A549 (cell line): ENCODE measurements at regions of chr5 and their contacts with region 1.

Region 1: GRCh38 chr5:170070556-170071412 is 34.9 kb upstream of the FOXI1 start:
- DNase-seq: peak; percentile 45 to 52
- ATAC-seq: peak; percentile 70 to 97; a peak in 3 of 6 replicates
- H3K4me3 ChIP-seq: no peak overlapping the region
- H3K27ac ChIP-seq: no peak overlapping the region
- H3K4me1 ChIP-seq: no peaks in the 10 kb centered on the region
- CTCF ChIP-seq: peak; percentile 77
- EP300 ChIP-seq: no peak
- POLR2A ChIP-seq: no peak
- RAD21 ChIP-seq: peak; percentile 56 to 57

Region 2: GRCh38 chr5:169325273-169325672 is 745.5 kb before region 1 on chr5:
- CTCF ChIA-PET with region 1: no interaction called
- POLR2A ChIA-PET with region 1: no interaction called
- DNase-seq: no peak
- ATAC-seq: no peak
- H3K4me3 ChIP-seq: no peak overlapping the region
- H3K27ac ChIP-seq: no peak overlapping the region
- H3K4me1 ChIP-seq: no peaks in the 10 kb centered on the region
- CTCF ChIP-seq: no peak
- EP300 ChIP-seq: no peak
- POLR2A ChIP-seq: no peak
- RAD21 ChIP-seq: no peak

Region 3: DNA sequence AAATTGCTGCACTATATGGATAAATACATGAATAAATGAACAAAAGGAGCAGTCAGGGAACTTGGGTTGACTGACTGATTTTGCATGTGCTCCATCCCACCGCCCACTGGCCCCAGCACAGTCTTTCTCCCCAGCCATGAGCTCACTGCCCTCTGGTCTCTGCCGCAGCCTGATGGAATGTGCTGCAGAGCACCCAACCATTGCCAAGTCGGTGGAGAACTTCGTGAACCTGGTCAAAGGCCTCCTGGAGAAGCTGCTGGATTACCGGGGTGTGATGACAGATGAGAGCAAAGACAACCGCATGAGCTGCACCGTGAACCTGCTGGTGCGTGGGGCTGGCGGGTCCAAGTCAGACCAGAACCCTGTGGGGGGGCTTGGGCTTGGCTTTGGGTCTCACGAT is 36.6 kb before region 1 on chr5:
- CTCF ChIA-PET with region 1: interaction called, 11 read pairs
- POLR2A ChIA-PET with region 1: no interaction called
- DNase-seq: no peak
- ATAC-seq: no peak
- H3K4me3 ChIP-seq: no peak overlapping the region
- H3K27ac ChIP-seq: no peak overlapping the region
- H3K4me1 ChIP-seq: no peaks in the 10 kb centered on the region
- CTCF ChIP-seq: no peak
- EP300 ChIP-seq: no peak
- POLR2A ChIP-seq: no peak
- RAD21 ChIP-seq: no peak

Region 4: GRCh38 chr5:170056561-170057267 is 14.1 kb before region 1 on chr5:
- CTCF ChIA-PET with region 1: interaction called, 13 read pairs
- POLR2A ChIA-PET with region 1: no interaction called
- DNase-seq: no peak
- ATAC-seq: no peak
- H3K4me3 ChIP-seq: no peak overlapping the region
- H3K27ac ChIP-seq: no peak overlapping the region
- H3K4me1 ChIP-seq: no peaks in the 10 kb centered on the region
- CTCF ChIP-seq: no peak
- EP300 ChIP-seq: no peak
- POLR2A ChIP-seq: no peak
- RAD21 ChIP-seq: no peak